ENCODE measurements at regions of chrX and their contacts with region 1.

Region 1: GRCh38 chrX:154980330-154981096 is 42.0 kb downstream of the F8 start:
- DNase-seq: peak in 9 of 10 donors; percentile 24 to 74 (median 59)
- H3K4me3 ChIP-seq: peak overlapping the region in 56 of 59 donors; percentile 16 to 65 (median 44)
- H3K27ac ChIP-seq: no peak overlapping the region
- H3K27me3 ChIP-seq: peaks cover 0 to 30% (median 3%) of the 10 kb centered on the region in 45 donors
- CTCF ChIP-seq: peak in 55 of 56 donors; percentile 26 to 80 (median 65)

Region 2: DNA sequence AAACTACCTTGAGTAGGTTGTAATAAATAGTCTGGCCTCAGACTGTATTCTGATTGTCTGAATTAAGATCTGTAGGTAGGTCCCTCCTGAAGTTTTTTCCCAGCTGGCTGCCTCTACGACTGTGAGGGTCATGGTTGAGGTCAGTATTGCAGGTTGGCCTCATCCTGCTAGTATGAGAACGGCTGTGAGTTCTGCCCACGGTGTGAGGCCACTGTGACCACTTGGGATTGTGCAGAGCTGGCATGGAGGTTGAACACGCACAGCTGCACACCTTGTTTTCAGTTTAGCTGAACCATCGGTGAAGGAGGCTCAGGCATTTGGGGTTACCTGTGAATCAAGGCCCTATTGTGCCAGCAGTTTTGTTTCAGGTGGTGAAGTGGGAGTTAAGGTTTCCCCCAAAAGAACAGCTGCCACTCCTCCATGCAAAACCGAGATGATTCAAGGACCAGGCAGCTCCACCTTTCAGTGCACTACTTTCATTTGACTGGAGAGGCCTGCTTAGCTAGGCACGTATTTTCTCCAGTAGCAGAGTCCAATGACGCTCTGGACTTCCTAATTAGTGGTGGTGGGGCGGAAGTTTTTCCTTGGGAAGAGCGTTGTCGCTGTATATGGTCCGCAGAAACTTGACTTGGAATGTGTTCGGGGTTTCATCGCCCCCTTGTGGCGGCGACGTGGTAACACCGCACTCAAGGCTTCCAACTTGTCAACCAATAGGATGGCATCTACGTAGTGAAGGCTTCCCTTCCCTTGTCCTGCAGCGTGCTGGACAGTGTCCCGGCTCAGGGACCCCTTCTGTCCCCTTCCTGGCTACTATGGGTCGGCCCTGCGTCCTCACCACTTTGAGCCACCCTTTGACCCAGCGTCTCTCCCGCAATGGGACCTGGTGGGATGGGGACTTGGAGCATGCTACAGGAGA is 76.6 kb after region 1 on chrX:
- intact Hi-C with region 1: loop called (anchors 2 to 10 kb)
- DNase-seq: peak in 9 of 10 donors; percentile 36 to 68 (median 51)
- H3K4me3 ChIP-seq: peak overlapping the region in 23 of 59 donors; percentile 1 to 43 (median 22)
- H3K27ac ChIP-seq: peak overlapping the region in 4 of 59 donors; percentile 9 to 43 (median 26)
- H3K27me3 ChIP-seq: peaks cover 0 to 49% (median 3%) of the 10 kb centered on the region in 45 donors
- CTCF ChIP-seq: peak; percentile 41 to 84 (median 71)

Region 3: GRCh38 chrX:155216179-155216939 is 235.8 kb after region 1 on chrX and contains the start of gene VBP1:
- intact Hi-C with region 1: no loop called
- DNase-seq: peak; percentile 82 to 95 (median 93)
- H3K4me3 ChIP-seq: peak within 1 kb of the TSS; percentile 44 to 80 (median 63)
- H3K27ac ChIP-seq: peak within 1 kb of the TSS; percentile 12 to 93 (median 85)
- H3K27me3 ChIP-seq: peaks cover 0 to 28% (median 0%) of the 10 kb centered on the region in 45 donors
- CTCF ChIP-seq: peak in 48 of 56 donors; percentile 8 to 57 (median 36)
- total RNA-seq, gene VBP1: 34.0 to 81.7 (median 54.7) TPM

Region 4: GRCh38 chrX:155819966-155820491 is 839.5 kb after region 1 on chrX:
- intact Hi-C with region 1: loop called in 1 of 2 experiments (anchors 10 kb)
- DNase-seq: peak in 4 of 10 donors; percentile 10 to 42 (median 24)
- H3K4me3 ChIP-seq: no peak overlapping the region
- H3K27ac ChIP-seq: no peak overlapping the region
- H3K27me3 ChIP-seq: peaks cover 0 to 13% (median 0%) of the 10 kb centered on the region in 45 donors
- CTCF ChIP-seq: peak in 50 of 56 donors; percentile 16 to 70 (median 48)

Measured in dorsolateral prefrontal cortex (tissue), 120 donors.